ENCODE measurements at regions of chr5 and their contacts with region 1.

Region 1: GRCh38 chr5:177113566-177114424 is 19.8 kb upstream of the NSD1 start:
- DNase-seq: peak; percentile 88
- H3K4me3 Mint-ChIP-seq: no peak overlapping the region
- H3K27ac Mint-ChIP-seq: no peak overlapping the region
- H3K4me1 Mint-ChIP-seq: peaks cover 27% of the 10 kb centered on the region
- H3K27me3 Mint-ChIP-seq: peaks cover 10% of the 10 kb centered on the region

Region 2: DNA sequence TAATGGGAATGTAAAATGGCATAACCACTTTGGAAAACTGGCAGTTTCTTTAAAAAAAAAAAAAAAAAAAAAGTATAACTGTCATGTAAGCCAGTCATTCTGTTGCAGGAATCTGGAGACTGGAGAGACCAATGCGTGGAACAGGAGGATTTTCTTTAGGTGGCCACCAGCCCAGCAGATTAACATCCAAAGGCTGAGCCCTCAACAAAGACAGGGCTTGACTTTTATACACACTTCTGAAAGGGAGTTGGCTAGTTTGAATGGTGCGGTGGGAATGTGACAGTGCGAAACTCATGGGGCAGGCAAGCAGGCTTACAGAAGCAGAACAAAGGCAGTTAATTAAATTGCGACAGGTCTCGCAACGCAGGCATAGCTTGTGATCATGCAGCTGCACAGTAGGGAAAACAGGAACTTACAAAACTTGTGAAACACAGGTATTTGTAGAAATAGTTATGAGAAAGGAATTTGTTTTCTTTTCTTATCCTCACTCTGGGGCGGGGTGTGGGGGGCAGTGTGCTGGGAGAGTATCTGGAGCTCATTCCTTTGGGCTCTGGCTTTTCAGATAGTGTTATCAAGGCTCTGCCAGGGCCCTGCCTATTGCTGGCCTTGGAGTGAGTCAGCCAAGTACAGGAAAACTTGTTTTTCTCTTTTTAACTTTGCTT is 119.2 kb before region 1 on chr5:
- CTCF ChIA-PET with region 1: no interaction called
- DNase-seq: no peak
- H3K4me3 Mint-ChIP-seq: no peak overlapping the region
- H3K27ac Mint-ChIP-seq: no peak overlapping the region
- H3K4me1 Mint-ChIP-seq: peaks cover 28% of the 10 kb centered on the region
- H3K27me3 Mint-ChIP-seq: no peaks in the 10 kb centered on the region

Region 3: GRCh38 chr5:177071666-177072385 is 42.0 kb before region 1 on chr5:
- CTCF ChIA-PET with region 1: interaction called, 64 read pairs
- DNase-seq: peak; percentile 78
- H3K4me3 Mint-ChIP-seq: no peak overlapping the region
- H3K27ac Mint-ChIP-seq: no peak overlapping the region
- H3K4me1 Mint-ChIP-seq: peaks cover 3% of the 10 kb centered on the region
- H3K27me3 Mint-ChIP-seq: no peaks in the 10 kb centered on the region

Region 4: DNA sequence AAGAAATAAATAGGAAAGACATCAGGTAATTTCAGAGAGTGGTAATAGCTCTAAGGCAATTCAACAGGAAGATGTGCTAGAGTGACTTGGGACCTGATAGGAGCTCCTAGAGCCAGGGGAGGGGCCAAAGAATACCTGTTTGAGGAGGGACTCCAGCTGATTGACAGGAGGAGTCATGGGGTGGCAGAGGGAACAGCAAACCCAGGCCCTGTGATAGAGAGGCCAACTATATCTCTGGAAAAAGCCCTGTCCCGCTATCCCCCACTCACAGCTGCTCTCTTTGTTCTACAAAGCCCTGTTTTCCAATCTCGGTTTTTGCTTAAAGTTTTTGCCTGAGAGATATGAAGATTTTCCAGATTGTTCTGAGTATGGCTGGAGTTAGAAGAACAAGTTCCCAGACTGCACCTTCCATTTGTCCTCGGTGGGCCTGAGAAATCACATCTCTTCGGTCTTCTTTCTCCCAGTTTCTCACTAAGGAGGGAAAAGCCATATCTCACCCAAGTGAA is 10.7 kb after region 1 on chr5:
- CTCF ChIA-PET with region 1: interaction called, 38 read pairs
- DNase-seq: no peak
- H3K4me3 Mint-ChIP-seq: no peak overlapping the region
- H3K27ac Mint-ChIP-seq: no peak overlapping the region
- H3K4me1 Mint-ChIP-seq: peaks cover 33% of the 10 kb centered on the region
- H3K27me3 Mint-ChIP-seq: peaks cover 14% of the 10 kb centered on the region

Region 5: DNA sequence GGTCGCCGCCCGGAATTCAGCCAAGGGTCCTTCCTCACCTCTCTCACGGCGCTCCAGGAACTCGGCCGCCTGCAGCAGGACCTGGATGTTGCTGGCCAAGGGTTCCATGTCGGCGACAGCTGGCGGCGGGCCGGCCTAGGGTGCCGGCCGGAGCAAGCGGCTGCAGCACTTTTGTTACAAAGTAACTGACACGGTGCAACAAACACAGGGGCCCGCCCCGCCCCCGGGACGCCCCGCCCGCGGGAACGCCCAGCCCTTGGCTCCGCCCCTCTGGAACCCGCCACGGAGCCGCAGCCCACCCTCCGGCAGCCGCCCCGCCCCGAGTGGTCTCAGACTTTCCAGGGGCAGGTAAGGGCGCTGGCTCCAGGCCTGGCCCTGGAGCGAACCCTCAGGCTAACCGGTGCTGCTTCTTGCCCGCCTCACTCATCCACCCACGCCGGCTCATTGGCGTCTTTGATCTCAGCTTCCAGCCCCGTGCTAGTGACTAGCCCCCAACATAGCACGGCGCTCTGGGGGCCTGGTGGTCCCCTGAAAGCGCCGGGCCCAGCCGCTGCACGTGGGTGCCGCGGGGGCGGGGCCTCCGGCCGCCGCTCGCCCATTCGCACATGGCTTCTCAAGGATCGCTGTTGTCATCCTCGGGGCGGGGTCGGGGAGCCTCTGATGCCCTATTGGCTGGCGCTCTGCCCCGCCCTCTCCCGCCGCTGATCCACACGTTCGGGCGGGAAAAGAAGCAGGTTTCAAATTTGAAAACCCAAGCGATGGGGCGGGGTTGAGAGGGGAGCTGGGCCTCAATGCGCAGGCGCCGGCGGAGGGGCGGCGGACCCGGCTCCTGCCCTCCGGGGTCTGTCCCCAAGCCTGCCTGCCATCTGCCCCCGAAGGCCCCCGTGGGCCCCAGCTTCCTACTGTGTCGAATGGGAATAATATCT is 198.2 kb after region 1 on chr5 and contains the start of gene MXD3:
- CTCF ChIA-PET with region 1: interaction called, 75 read pairs
- DNase-seq: peak; percentile 99
- H3K4me3 Mint-ChIP-seq: peak within 1 kb of the TSS; percentile 100
- H3K27ac Mint-ChIP-seq: peak within 1 kb of the TSS; percentile 94
- H3K4me1 Mint-ChIP-seq: peaks cover 57% of the 10 kb centered on the region
- H3K27me3 Mint-ChIP-seq: no peaks in the 10 kb centered on the region

Region 6: GRCh38 chr5:177382423-177383029 is 268.7 kb after region 1 on chr5:
- CTCF ChIA-PET with region 1: interaction called, 10 read pairs
- DNase-seq: peak; percentile 64
- H3K4me3 Mint-ChIP-seq: no peak overlapping the region
- H3K27ac Mint-ChIP-seq: no peak overlapping the region
- H3K4me1 Mint-ChIP-seq: peaks cover 31% of the 10 kb centered on the region
- H3K27me3 Mint-ChIP-seq: peaks cover 44% of the 10 kb centered on the region